Activated CD4-positive, alpha-beta T cell treated with anti-CD3 and anti-CD28 coated beads, Interleukin-2, amount 10 ng/mL, durations not matched to agents 24 days and 14 days (primary cell): ENCODE measurements at regions of chr9 and their contacts with region 1.

Region 1: DNA sequence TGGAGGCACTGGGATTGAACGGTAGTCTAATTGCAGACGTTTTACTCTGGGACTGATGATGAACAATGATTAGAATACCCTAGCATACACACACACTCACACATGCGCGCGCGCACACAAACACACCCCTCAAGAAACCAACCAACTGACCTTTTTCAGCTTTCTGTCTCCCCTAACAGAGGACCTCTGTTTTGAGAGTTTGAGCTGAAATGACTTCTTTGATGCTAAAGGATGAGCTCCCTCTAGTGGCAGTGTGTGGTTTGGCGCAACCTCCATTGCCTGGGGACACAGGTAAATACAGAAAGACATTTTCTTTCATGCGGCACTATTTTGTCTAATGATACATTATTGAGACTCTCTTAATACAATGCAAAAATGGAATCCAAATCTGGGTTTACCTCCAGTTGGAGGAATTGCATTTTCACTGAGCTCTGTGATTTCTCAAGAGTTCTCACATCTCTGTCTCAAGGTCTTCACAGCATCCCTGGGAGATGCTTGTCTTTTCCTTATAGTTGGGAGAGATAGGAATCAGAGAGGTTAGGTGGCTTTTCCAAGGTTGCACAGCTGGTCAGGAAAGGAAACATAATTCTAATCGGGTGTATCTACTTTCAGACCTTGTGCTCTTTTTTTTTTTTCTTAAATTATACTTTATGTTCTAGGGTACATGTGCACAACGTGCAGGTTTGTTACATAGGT is 187.5 kb downstream of the TMEM38B start:
- DNase-seq: peak; percentile 91
- H3K4me3 Mint-ChIP-seq: no peak overlapping the region
- H3K27ac Mint-ChIP-seq: no peak overlapping the region
- H3K4me1 Mint-ChIP-seq: peaks cover 21% of the 10 kb centered on the region
- H3K27me3 Mint-ChIP-seq: peaks cover 31% of the 10 kb centered on the region

Region 2: DNA sequence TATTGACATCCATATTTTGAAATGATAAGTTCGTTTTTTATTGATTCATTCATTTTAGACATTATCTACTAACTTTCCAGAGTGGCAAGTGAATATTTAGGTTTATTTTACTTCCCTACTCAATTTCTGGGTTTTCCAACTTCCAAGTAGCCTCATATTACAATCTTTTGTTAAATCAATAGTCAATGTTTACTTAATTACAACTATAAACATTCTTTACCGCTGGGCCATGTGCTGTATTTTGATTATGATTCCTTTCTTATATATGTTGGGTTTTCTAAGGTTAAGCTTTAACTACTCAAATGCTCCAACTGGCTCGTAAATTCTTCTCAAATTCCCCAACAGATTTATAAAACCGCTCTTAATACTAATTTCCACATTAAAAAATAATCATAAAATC is 843.8 kb before region 1 on chr9:
- intact Hi-C with region 1: no loop called
- DNase-seq: no peak
- H3K4me3 Mint-ChIP-seq: no peak overlapping the region
- H3K27ac Mint-ChIP-seq: no peak overlapping the region
- H3K4me1 Mint-ChIP-seq: no peaks in the 10 kb centered on the region
- H3K27me3 Mint-ChIP-seq: peaks cover 10% of the 10 kb centered on the region

Region 3: DNA sequence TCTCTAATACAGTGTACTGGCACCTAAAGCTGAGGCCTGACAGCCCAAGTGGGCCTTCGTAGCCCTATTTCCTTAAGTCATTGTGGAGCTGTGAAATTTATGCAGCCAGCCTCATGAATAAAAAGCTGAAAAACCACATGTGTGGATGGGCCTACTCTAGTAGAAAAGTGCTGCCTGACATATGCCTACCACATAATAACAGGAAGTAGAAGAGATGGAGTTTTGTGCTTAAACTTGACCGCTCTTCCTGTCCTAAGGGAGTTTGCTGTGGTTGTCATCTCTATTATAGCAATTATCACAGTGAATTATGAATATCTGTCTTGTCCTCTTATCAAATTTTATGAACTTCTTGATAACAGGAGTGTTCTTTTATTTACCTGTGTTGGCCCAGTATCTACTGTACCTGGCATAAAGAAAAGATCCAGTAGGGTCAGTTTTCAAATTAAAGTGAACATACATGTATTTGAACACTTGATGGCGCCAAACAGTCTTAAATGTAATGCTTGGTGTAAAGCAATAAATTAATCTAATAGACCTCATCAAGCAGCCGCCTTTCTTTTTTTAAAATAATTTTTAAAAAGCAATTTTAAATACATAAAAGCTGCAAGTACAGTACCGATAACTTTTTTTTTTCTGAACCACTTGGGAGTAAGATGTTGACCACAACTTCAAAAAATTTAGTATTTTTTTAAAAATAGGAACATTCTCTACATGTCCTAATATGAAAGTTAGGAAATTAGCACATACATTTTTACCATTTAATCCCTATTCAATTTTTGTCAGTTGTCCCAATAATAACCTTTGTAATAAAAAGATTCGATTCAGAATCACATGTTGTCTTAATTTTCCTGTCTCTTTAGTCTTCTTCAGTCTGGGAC is 272.8 kb before region 1 on chr9:
- intact Hi-C with region 1: loop called (anchors 5 kb)
- DNase-seq: peak; percentile 58
- H3K4me3 Mint-ChIP-seq: no peak overlapping the region
- H3K27ac Mint-ChIP-seq: no peak overlapping the region
- H3K4me1 Mint-ChIP-seq: no peaks in the 10 kb centered on the region
- H3K27me3 Mint-ChIP-seq: no peaks in the 10 kb centered on the region

Region 4: GRCh38 chr9:105842023-105842644 is 39.7 kb before region 1 on chr9:
- intact Hi-C with region 1: loop called (anchors 1 kb)
- DNase-seq: peak; percentile 79
- H3K4me3 Mint-ChIP-seq: no peak overlapping the region
- H3K27ac Mint-ChIP-seq: no peak overlapping the region
- H3K4me1 Mint-ChIP-seq: no peaks in the 10 kb centered on the region
- H3K27me3 Mint-ChIP-seq: no peaks in the 10 kb centered on the region

Region 5: DNA sequence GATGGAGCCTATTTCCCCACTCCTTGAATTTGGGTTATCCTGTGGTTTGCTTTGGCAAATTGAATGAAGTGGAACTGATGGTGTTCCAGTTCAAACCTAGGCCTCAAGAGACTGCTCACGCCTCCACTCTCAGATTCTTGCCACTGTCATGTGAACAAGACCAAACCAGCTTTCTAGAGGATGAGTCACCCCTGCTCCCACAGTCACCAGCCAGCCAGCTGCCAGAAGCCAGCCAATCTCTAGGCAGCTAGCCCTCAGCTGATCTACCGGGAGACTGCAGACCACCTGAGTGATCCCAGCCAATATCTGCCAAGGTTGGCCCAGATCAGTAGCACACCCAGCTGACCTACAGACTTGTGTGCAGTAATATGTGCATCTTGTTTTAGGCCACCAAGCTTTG is 113.2 kb after region 1 on chr9:
- intact Hi-C with region 1: no loop called
- DNase-seq: no peak
- H3K4me3 Mint-ChIP-seq: no peak overlapping the region
- H3K27ac Mint-ChIP-seq: no peak overlapping the region
- H3K4me1 Mint-ChIP-seq: no peaks in the 10 kb centered on the region
- H3K27me3 Mint-ChIP-seq: no peaks in the 10 kb centered on the region

Region 6: GRCh38 chr9:106111045-106111717 is 229.4 kb after region 1 on chr9:
- intact Hi-C with region 1: no loop called
- DNase-seq: no peak
- H3K4me3 Mint-ChIP-seq: no peak overlapping the region
- H3K27ac Mint-ChIP-seq: no peak overlapping the region
- H3K4me1 Mint-ChIP-seq: no peaks in the 10 kb centered on the region
- H3K27me3 Mint-ChIP-seq: no peaks in the 10 kb centered on the region